ENCODE measurements at regions of chr3 and their contacts with region 1.

Region 1: GRCh38 chr3:184249412-184250166 is at the start of gene EEF1AKMT4:
- DNase-seq: peak; percentile 95
- total RNA-seq, gene EEF1AKMT4: 1.5 TPM

Region 2: DNA sequence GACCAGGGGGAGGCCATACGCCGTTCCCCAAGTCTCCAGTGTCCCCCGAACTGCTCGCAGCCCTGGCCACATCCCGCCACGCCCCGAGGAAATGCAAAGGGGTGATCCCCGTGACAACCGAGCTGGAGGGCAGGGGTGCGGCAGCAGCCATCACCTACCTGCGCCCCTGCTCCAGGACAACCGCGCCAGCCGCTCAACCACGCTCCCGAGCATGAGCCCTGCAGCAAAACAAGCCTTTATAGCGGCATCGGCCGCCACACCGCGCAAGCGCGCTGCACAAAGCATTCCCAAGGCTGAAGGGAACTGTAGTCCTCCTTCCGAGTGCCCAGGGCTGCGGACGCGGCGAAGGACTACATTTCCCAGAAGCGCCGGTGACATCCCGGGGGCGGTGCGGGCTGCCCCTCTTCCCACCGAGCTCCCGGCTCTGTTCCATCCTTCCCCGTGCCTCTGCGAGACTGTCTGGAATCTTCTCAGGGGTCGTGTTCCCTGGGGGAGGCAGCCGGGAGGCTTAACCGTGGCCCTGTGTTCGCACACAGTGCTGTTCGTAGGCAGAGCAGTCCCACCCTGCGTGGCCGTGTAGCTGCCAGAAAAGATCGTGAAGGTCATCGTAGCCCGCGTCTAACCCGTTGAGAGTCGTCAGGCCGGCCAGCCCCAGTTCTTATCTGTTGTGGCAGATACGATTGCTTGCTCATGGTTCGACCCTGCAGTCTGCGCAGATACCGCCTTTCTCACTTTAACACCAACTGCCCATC is 231.7 kb before region 1 on chr3 and contains the start of gene ABCC5:
- intact Hi-C with region 1: loop called (anchors 5 kb)
- DNase-seq: peak; percentile 97
- total RNA-seq, gene ABCC5: 34.6 TPM

Region 3: DNA sequence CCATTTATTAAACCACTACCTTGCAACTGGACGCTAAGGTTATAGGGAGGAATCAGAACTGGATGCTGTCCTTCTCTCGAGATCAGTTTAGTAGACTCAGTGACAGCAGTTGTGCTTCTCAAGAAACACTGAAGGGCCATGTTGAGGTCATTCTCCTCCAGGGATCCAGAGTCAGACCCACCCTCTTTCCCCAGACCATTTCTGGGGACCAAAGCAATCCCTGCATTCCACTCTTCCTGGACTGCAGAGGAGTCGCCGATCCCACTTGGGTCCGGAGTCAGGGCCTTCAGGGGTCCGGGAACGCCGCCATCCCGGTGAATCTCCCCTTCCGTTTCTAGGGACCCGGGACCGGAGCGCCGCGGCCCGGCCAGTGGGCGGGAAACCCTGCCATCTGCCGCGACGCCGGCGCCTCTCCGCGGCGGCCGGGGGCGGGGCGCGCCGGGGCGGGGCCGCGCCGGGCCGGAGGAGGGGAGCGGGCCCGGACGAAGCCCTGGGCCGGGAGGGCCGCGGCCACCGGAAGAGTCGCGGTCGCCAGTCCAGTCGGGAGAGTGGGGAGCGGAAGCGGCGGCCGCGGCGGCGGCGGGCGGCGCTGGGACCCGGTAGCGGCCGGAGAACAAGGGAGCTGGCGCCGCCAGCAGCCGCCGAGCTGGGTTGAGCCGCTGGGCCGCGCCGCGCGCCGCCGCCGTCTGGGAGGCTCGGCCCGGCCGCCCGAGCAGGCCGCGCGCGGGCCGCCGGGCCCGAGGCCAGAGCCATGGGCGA is 94.5 kb before region 1 on chr3 and contains the start of gene DVL3:
- intact Hi-C with region 1: loop called (anchors 5 kb)
- DNase-seq: peak; percentile 84
- total RNA-seq, gene DVL3: 68.6 TPM

Region 4: GRCh38 chr3:184185461-184186308 is 63.9 kb before region 1 on chr3 and contains the start of gene ABCF3:
- intact Hi-C with region 1: loop called (anchors 2 kb)
- DNase-seq: peak; percentile 100
- total RNA-seq, gene ABCF3: 61.5 TPM

Region 5: GRCh38 chr3:184395320-184395660 is 145.7 kb after region 1 on chr3:
- intact Hi-C with region 1: no loop called
- DNase-seq: no peak

Measured in cardiac septum (tissue), 1 donor.